Mammary epithelial cell (primary cell): ENCODE measurements at regions of chr6 and their contacts with region 1.

Region 1: DNA sequence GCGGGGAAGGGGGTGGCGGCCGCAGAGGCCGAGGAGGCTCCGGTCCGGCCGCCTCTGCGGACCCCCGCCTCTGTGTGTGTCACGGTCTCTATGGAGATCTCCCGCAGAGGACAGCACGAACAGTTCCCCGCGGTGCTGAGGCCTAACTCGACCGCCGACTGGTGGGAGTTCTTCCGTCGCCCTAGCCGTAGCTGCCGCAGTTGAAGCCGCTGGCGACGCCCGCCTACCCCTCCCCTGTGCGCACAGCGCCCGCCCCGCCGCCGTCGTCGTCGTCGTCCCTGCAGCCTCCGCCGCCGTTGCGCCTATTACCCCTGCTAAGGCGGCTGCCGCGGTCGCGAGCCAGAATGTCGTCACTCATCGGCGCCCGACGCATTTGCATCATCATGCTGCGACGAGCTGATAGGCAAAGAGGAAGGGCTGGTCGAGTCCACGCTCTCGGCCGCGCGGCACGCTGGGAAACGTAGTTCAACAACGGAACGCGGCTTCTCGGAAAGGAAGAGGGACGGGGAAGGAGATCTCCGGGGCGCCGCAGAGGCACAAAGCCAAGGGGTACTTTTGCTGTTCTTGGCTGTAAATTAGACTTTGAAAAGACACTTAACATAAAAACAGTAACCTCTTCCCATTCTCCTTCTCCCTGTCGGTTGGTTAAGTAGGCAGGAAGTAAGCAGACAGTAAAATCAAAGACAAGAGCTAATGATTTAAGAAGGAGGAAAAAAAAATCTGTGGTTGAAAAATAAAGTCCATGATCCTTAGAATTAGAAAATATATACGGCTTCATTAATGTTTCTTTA is at the start of gene NUP153:
- DNase-seq: peak; percentile 98
- H3K4me3 ChIP-seq: peak within 1 kb of the TSS; percentile 91 to 96 (median 92)
- H3K27ac ChIP-seq: peak within 1 kb of the TSS; percentile 96
- H3K4me1 ChIP-seq: peaks cover 27% of the 10 kb centered on the region
- H3K27me3 ChIP-seq: no peaks in the 10 kb centered on the region
- CTCF ChIP-seq: no peak
- total RNA-seq, gene NUP153: 32.3 to 34.8 TPM

Region 2: GRCh38 chr6:17469006-17469832 is 237.6 kb before region 1 on chr6:
- CTCF ChIA-PET with region 1: no interaction called
- dilution Hi-C with region 1: no loop called
- in situ Hi-C with region 1: no loop called
- intact Hi-C with region 1: no loop called
- DNase-seq: no peak
- H3K4me3 ChIP-seq: no peak overlapping the region
- H3K27ac ChIP-seq: no peak overlapping the region
- H3K4me1 ChIP-seq: no peaks in the 10 kb centered on the region
- H3K27me3 ChIP-seq: no peaks in the 10 kb centered on the region
- CTCF ChIP-seq: no peak

Region 3: DNA sequence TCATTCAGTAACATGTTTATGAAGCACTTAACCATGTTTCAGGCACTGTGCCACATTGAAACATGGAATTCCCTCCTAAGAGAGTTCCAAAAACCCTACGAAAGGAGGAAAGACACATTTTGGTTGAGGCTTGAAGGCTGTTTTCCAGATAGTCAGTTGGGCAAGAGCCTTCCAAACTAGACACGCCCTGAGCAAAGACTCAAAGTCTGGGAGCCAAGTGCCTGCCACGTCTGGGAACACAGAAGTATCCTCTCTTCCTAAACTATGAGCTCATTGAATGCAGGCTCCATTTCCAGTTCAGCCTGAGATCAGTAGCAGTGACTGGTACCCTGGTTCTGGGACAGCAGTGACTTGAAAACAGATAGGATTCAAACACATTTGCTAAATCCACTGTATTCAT is 181.1 kb before region 1 on chr6:
- CTCF ChIA-PET with region 1: no interaction called
- dilution Hi-C with region 1: no loop called
- in situ Hi-C with region 1: no loop called
- intact Hi-C with region 1: no loop called
- DNase-seq: no peak
- H3K4me3 ChIP-seq: no peak overlapping the region
- H3K27ac ChIP-seq: no peak overlapping the region
- H3K4me1 ChIP-seq: no peaks in the 10 kb centered on the region
- H3K27me3 ChIP-seq: no peaks in the 10 kb centered on the region
- CTCF ChIP-seq: no peak

Region 4: DNA sequence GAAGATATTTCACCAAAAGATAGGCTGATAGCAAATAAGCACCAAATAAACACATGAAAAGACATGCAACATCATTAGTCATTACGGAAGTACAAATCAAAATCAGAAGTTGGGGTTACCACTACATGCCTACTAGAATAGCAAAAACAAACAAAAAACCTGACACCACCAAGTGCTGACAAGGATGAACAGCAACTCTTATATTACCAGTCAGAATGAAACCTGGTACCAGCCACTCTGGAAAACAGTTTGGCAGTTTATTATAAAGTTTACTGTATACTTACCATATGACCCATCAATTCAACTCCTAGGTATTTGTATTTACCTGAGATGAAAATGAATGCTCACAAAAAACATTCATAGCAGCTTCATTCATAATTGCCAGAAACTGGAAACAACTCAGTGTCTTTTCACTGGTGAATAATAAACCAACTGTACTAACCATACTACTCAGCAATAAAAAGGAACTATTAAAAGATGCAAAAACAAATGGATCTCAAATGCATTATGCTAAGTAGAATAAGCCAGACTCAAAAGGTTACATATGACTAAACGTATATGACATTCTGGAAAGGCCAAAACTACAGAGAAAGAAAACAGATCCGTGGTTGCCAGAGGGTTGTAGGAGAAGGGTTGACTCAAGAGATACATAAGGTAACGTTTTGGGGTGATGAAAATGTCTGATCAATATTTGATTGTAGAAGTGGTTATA is 33.1 kb before region 1 on chr6:
- CTCF ChIA-PET with region 1: no interaction called
- dilution Hi-C with region 1: loop called (anchors 5 kb)
- in situ Hi-C with region 1: no loop called
- intact Hi-C with region 1: no loop called
- DNase-seq: peak; percentile 1
- H3K4me3 ChIP-seq: no peak overlapping the region
- H3K27ac ChIP-seq: no peak overlapping the region
- H3K4me1 ChIP-seq: no peaks in the 10 kb centered on the region
- H3K27me3 ChIP-seq: no peaks in the 10 kb centered on the region
- CTCF ChIP-seq: peak in 1 of 2 donors; percentile 1

Region 5: GRCh38 chr6:17741507-17741906 is 34.7 kb after region 1 on chr6:
- CTCF ChIA-PET with region 1: no interaction called
- dilution Hi-C with region 1: no loop called
- in situ Hi-C with region 1: no loop called
- intact Hi-C with region 1: loop called (anchors 5 kb)
- DNase-seq: peak; percentile 52
- H3K4me3 ChIP-seq: no peak overlapping the region
- H3K27ac ChIP-seq: no peak overlapping the region
- H3K4me1 ChIP-seq: peaks cover 8% of the 10 kb centered on the region
- H3K27me3 ChIP-seq: no peaks in the 10 kb centered on the region
- CTCF ChIP-seq: no peak